Mammary epithelial cell (primary cell): ENCODE measurements at regions of chr16 and their contacts with region 1.

Region 1: DNA sequence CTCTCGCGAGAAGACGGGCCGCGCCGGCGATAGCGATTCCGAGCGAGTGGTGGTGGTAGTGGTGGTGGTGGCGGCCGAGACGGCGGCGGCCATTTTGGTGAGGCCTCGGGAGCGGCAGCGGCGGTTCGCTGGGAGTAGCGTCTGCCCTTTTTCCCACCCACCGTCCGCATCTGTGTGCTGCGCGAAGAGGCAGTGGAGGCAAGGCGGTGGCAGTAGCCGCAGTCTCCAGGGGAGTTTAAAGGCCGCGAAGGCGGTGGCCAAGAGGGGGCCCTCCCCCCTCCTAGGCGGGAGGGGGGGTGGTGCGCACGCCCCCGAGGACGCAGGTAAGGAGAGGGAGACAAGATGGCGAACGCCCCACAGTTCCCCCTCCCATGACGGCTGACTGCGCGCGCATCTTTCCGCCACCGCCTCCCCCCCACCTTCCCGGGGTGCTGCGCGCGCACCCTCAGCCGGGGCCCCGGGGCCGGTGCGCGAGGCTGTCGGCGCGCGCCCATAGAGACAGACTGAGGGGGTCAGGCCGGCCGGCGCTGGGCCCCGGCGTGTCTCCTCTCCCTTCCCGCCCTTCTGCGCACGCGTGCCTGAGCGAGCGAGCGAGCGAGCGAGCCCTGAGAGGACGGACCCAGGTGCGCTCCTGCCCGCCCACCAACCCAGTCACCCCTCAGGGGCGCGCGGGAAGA is 694 bp upstream of the SRCAP start:
- DNase-seq: peak; percentile 96
- H3K4me3 ChIP-seq: peak overlapping the region; percentile 78 to 99 (median 97)
- H3K27ac ChIP-seq: peak overlapping the region; percentile 94
- H3K4me1 ChIP-seq: peaks cover 19% of the 10 kb centered on the region
- H3K27me3 ChIP-seq: no peaks in the 10 kb centered on the region
- CTCF ChIP-seq: no peak

Region 2: GRCh38 chr16:30091474-30092372 is 606.6 kb before region 1 on chr16 and contains the start of gene TBX6:
- CTCF ChIA-PET with region 1: no interaction called
- dilution Hi-C with region 1: no loop called
- in situ Hi-C with region 1: no loop called
- intact Hi-C with region 1: loop called (anchors 10 kb)
- DNase-seq: peak; percentile 84
- H3K4me3 ChIP-seq: peak within 1 kb of the TSS; percentile 33 to 57 (median 52)
- H3K27ac ChIP-seq: peak within 1 kb of the TSS; percentile 0
- H3K4me1 ChIP-seq: peaks cover 52% of the 10 kb centered on the region
- H3K27me3 ChIP-seq: no peaks in the 10 kb centered on the region
- CTCF ChIP-seq: peak; percentile 61 to 79
- total RNA-seq, gene TBX6: 0.73 TPM in 1 of 2 donors, not detected in the other

Region 3: GRCh38 chr16:30557957-30558788 is 140.1 kb before region 1 on chr16 and contains the start of gene ZNF764:
- CTCF ChIA-PET with region 1: no interaction called
- dilution Hi-C with region 1: no loop called
- in situ Hi-C with region 1: no loop called
- intact Hi-C with region 1: no loop called
- DNase-seq: peak; percentile 98
- H3K4me3 ChIP-seq: peak within 1 kb of the TSS; percentile 77 to 93 (median 92)
- H3K27ac ChIP-seq: peak within 1 kb of the TSS; percentile 81
- H3K4me1 ChIP-seq: peaks cover 9% of the 10 kb centered on the region
- H3K27me3 ChIP-seq: no peaks in the 10 kb centered on the region
- CTCF ChIP-seq: no peak
- total RNA-seq, gene ZNF764: 5.5 to 6.6 TPM

Region 4: DNA sequence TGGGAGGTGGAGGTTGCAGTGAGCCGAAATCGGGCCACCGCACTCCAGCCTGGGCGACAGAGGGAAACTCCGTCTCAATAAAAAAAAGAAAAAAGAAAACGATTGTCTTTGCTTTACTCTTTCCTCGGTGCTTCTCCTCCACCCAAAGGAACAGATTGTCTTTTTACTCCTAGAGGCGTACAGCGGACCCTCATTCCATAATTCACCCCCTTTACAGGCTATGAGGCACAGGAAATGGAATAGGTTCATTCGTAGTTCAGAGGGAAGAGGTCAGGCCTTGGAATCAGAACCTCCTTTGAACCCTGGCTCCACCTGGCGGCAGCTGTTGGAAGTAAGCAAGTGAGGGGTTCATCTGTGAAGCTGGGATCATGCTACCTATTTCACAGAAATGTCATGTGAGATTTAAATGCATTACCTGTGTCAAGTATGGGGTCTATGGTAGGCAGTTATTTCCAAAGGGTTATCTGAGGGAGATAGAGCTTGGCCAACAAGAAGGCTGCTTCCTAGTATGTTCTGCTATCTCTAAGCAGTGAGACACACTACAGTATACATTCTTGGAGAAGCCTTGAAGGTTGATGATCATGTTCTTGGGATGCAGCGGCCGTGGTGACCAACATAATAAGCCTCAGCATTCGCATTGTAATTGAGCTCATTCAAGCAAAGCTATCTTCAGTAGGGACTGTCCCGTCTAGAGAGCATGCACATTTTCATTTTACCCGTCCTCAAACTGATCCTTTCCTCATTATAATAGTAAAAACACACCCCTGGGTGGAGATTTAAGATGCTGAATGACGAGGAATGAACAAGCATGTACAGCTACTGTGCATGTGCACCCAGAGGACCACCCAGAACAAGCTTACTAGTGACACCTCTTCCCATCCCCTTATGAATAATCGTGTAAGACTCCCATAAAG is 69.4 kb before region 1 on chr16:
- CTCF ChIA-PET with region 1: no interaction called
- dilution Hi-C with region 1: no loop called
- in situ Hi-C with region 1: no loop called
- intact Hi-C with region 1: loop called (anchors 2 kb)
- DNase-seq: peak; percentile 46
- H3K4me3 ChIP-seq: no peak overlapping the region
- H3K27ac ChIP-seq: no peak overlapping the region
- H3K4me1 ChIP-seq: peaks cover 5% of the 10 kb centered on the region
- H3K27me3 ChIP-seq: no peaks in the 10 kb centered on the region
- CTCF ChIP-seq: peak; percentile 97 to 98

Region 5: GRCh38 chr16:30740364-30741251 is 42.3 kb after region 1 on chr16:
- CTCF ChIA-PET with region 1: no interaction called
- dilution Hi-C with region 1: no loop called
- in situ Hi-C with region 1: no loop called
- intact Hi-C with region 1: loop called (anchors 1 kb)
- DNase-seq: peak; percentile 98
- H3K4me3 ChIP-seq: peak overlapping the region; percentile 75 to 88 (median 81)
- H3K27ac ChIP-seq: peak overlapping the region; percentile 100
- H3K4me1 ChIP-seq: peaks cover 34% of the 10 kb centered on the region
- H3K27me3 ChIP-seq: no peaks in the 10 kb centered on the region
- CTCF ChIP-seq: no peak

Region 6: GRCh38 chr16:30750863-30751465 is 52.7 kb after region 1 on chr16:
- CTCF ChIA-PET with region 1: no interaction called
- dilution Hi-C with region 1: no loop called
- in situ Hi-C with region 1: no loop called
- intact Hi-C with region 1: no loop called
- DNase-seq: no peak
- H3K4me3 ChIP-seq: no peak overlapping the region
- H3K27ac ChIP-seq: no peak overlapping the region
- H3K4me1 ChIP-seq: peaks cover 7% of the 10 kb centered on the region
- H3K27me3 ChIP-seq: no peaks in the 10 kb centered on the region
- CTCF ChIP-seq: no peak

Region 7: GRCh38 chr16:30893744-30894539 is 195.7 kb after region 1 on chr16 and contains the start of gene BCL7C:
- CTCF ChIA-PET with region 1: no interaction called
- dilution Hi-C with region 1: no loop called
- in situ Hi-C with region 1: no loop called
- intact Hi-C with region 1: loop called (anchors 1 kb)
- DNase-seq: peak; percentile 87
- H3K4me3 ChIP-seq: peak within 1 kb of the TSS; percentile 54 to 86 (median 81)
- H3K27ac ChIP-seq: peak within 1 kb of the TSS; percentile 33
- H3K4me1 ChIP-seq: peaks cover 38% of the 10 kb centered on the region
- H3K27me3 ChIP-seq: no peaks in the 10 kb centered on the region
- CTCF ChIP-seq: peak; percentile 4 to 54
- total RNA-seq, gene BCL7C: 26.1 to 28.5 TPM

Region 8: GRCh38 chr16:30941600-30942425 is 243.5 kb after region 1 on chr16:
- CTCF ChIA-PET with region 1: no interaction called
- dilution Hi-C with region 1: loop called (anchors 10 kb)
- in situ Hi-C with region 1: no loop called
- intact Hi-C with region 1: no loop called
- DNase-seq: peak; percentile 67
- H3K4me3 ChIP-seq: no peak overlapping the region
- H3K27ac ChIP-seq: peak overlapping the region; percentile 11
- H3K4me1 ChIP-seq: peaks cover 24% of the 10 kb centered on the region
- H3K27me3 ChIP-seq: no peaks in the 10 kb centered on the region
- CTCF ChIP-seq: peak; percentile 97 to 98